IMR-90 (cell line): ENCODE measurements at regions of chr3 and their contacts with region 1.

Region 1: GRCh38 chr3:160486459-160486869 is 36.9 kb upstream of the TRIM59 start:
- DNase-seq: peak; percentile 71
- ATAC-seq: no peak
- H3K4me3 ChIP-seq: no peak overlapping the region
- H3K27ac ChIP-seq: no peak overlapping the region
- H3K4me1 ChIP-seq: peaks cover 4% of the 10 kb centered on the region
- H3K27me3 ChIP-seq: no peaks in the 10 kb centered on the region
- CTCF ChIP-seq: peak; percentile 64
- POLR2A ChIP-seq: no peak
- RAD21 ChIP-seq: peak; percentile 48

Region 2: DNA sequence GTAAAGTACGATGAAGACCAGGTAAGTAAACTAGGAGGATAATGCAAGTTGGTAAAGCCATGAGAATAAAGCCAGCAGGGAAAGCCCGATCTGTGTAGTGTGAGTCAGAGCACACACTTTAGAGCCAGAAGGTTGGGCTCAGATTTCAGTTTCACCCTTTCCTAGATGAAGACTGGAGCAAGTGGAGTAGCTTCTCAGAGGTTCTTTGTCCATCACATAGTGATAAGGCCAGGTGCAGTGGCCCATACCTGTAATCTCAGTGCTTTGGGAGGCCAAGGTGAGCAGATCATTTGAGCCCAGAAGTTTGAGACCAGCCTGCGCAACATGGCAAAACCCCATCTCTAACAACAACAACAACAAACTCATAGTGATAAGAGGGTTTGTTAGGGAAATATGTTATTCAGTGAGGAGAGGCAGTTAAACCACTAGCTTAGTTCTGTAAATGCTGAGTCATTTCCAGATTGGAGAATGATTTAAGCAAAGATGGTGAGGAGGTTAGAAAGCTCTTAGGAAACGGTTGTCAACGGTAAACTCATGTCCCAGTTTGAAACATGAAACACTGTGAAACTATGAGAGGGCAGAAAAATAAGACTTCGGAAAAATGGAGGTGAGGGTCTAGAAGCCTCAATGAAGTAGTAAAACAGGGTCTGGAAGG is 458.8 kb before region 1 on chr3:
- CTCF ChIA-PET with region 1: no interaction called
- POLR2A ChIA-PET with region 1: no interaction called
- dilution Hi-C with region 1: no loop called
- in situ Hi-C with region 1: no loop called
- intact Hi-C with region 1: loop called (anchors 1 kb)
- DNase-seq: peak; percentile 88
- ATAC-seq: peak; percentile 79
- H3K4me3 ChIP-seq: no peak overlapping the region
- H3K27ac ChIP-seq: peak overlapping the region; percentile 93
- H3K4me1 ChIP-seq: peaks cover 14% of the 10 kb centered on the region
- H3K27me3 ChIP-seq: no peaks in the 10 kb centered on the region
- CTCF ChIP-seq: no peak
- POLR2A ChIP-seq: peak; percentile 53; the same call in 1 of the 2 replicates
- RAD21 ChIP-seq: no peak

Region 3: GRCh38 chr3:160150525-160150924 is 335.9 kb before region 1 on chr3:
- CTCF ChIA-PET with region 1: no interaction called
- POLR2A ChIA-PET with region 1: no interaction called
- dilution Hi-C with region 1: no loop called
- in situ Hi-C with region 1: loop called (anchors 10 kb)
- intact Hi-C with region 1: no loop called
- DNase-seq: peak; percentile 74
- ATAC-seq: no peak; the same call in 1 of the 2 replicates
- H3K4me3 ChIP-seq: no peak overlapping the region
- H3K27ac ChIP-seq: no peak overlapping the region
- H3K4me1 ChIP-seq: peaks cover 2% of the 10 kb centered on the region; the same call in 1 of the 2 replicates
- H3K27me3 ChIP-seq: peaks cover 3% of the 10 kb centered on the region; the same call in 1 of the 2 replicates
- CTCF ChIP-seq: no peak
- POLR2A ChIP-seq: no peak
- RAD21 ChIP-seq: no peak

Region 4: GRCh38 chr3:160163229-160163878 is 323.1 kb before region 1 on chr3:
- CTCF ChIA-PET with region 1: interaction called, 3 read pairs
- POLR2A ChIA-PET with region 1: no interaction called
- dilution Hi-C with region 1: no loop called
- in situ Hi-C with region 1: loop called (anchors 10 kb)
- intact Hi-C with region 1: loop called (anchors 5 kb)
- DNase-seq: peak; percentile 47
- ATAC-seq: peak; percentile 72
- H3K4me3 ChIP-seq: no peak overlapping the region
- H3K27ac ChIP-seq: no peak overlapping the region
- H3K4me1 ChIP-seq: no peaks in the 10 kb centered on the region
- H3K27me3 ChIP-seq: no peaks in the 10 kb centered on the region
- CTCF ChIP-seq: peak; percentile 74
- POLR2A ChIP-seq: no peak
- RAD21 ChIP-seq: peak; percentile 69

Region 5: GRCh38 chr3:160434071-160434470 is 52.4 kb before region 1 on chr3:
- CTCF ChIA-PET with region 1: interaction called, 3 read pairs
- POLR2A ChIA-PET with region 1: no interaction called
- dilution Hi-C with region 1: no loop called
- in situ Hi-C with region 1: no loop called
- intact Hi-C with region 1: loop called (anchors 5 kb)
- DNase-seq: peak; percentile 60
- ATAC-seq: peak; percentile 81
- H3K4me3 ChIP-seq: no peak overlapping the region
- H3K27ac ChIP-seq: peak overlapping the region; percentile 29; the same call in 1 of the 2 replicates
- H3K4me1 ChIP-seq: peaks cover 4% of the 10 kb centered on the region; the same call in 1 of the 2 replicates
- H3K27me3 ChIP-seq: no peaks in the 10 kb centered on the region
- CTCF ChIP-seq: no peak
- POLR2A ChIP-seq: no peak
- RAD21 ChIP-seq: no peak

Region 6: DNA sequence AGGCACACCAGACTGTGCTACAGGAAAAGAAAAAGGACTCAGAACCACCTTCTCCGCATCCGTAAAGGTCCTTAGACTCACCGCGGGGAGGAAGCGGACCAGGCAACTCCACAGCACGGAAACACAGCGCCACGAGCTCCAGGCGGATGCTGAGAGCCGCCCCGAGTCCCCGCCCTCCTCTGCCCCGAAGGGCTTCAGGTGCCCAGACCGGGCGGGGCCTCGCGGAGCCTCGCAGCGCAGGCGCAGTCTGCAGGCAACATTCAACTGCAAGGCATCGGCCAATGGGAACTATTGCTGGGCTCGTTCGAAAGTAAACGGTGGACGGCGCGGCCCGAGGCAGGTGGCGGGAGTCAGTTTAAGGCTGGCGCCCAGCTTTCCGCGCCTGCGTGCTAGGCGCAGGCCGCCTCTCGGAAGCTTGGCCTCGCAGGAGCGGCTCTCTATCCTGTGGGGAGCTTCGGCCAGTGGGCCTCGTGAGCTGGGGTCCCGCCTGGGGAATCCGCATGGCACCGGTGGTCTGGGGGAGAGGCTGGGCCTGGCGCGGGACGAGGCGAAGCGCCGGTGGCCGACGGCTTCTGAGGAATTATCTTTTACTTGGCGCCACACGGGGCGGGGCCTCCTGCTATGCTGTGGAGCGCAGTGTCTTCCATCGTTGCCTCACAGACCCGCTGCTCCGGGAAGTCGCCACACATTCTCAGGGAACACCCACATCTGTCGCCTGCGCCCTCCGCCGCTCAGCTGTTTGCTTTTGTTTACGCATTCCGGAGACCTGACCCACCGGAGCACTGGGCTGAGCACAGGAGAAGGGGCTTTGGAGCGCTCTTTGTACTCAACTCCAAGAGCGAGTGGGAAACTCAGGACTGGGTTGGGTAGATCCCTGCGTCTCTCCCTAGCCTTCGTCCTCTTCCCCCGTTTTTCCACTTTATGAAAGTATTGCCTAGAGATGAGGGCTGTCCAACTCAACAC is 36.5 kb before region 1 on chr3 and contains the start of gene TRIM59:
- CTCF ChIA-PET with region 1: no interaction called
- POLR2A ChIA-PET with region 1: no interaction called
- dilution Hi-C with region 1: no loop called
- in situ Hi-C with region 1: no loop called
- intact Hi-C with region 1: loop called (anchors 1 kb)
- DNase-seq: peak; percentile 97
- ATAC-seq: peak; percentile 88
- H3K4me3 ChIP-seq: peak within 1 kb of the TSS; percentile 68
- H3K27ac ChIP-seq: peak within 1 kb of the TSS; percentile 87
- H3K4me1 ChIP-seq: peaks cover 10% of the 10 kb centered on the region
- H3K27me3 ChIP-seq: no peaks in the 10 kb centered on the region
- CTCF ChIP-seq: no peak
- POLR2A ChIP-seq: peak; percentile 49; the same call in 1 of the 2 replicates
- RAD21 ChIP-seq: no peak
- total RNA-seq, gene TRIM59: 65.4 and 68.3 TPM in 2 replicates

Region 7: DNA sequence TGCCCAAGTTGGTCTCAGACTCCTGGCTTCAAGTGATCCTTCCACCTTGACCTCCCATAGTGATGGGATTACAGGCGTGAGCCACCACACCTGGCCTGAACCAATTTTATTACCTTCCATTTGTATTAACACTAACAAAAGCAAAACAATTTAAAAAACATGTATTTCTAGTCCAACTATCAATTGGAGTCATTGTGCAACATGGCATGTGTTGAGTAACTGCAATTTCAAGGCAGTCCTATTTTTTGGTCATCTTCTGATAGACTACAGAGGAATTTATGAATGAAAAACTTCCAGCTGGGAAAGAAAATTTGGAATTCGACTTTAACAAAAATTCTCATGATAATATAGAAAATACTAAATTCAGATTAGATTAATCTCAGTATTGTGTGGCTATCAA is 868.1 kb after region 1 on chr3:
- CTCF ChIA-PET with region 1: no interaction called
- POLR2A ChIA-PET with region 1: no interaction called
- dilution Hi-C with region 1: no loop called
- in situ Hi-C with region 1: no loop called
- intact Hi-C with region 1: no loop called
- DNase-seq: no peak
- ATAC-seq: no peak
- H3K4me3 ChIP-seq: no peak overlapping the region
- H3K27ac ChIP-seq: no peak overlapping the region
- H3K4me1 ChIP-seq: no peaks in the 10 kb centered on the region
- H3K27me3 ChIP-seq: 0 out of 2 replicates have a peak, but pooled peaks cover 3% of the 10 kb centered on the region
- CTCF ChIP-seq: no peak
- POLR2A ChIP-seq: no peak
- RAD21 ChIP-seq: no peak